Mammary epithelial cell (primary cell): ENCODE measurements at regions of chr6 and their contacts with region 1.

Region 1: DNA sequence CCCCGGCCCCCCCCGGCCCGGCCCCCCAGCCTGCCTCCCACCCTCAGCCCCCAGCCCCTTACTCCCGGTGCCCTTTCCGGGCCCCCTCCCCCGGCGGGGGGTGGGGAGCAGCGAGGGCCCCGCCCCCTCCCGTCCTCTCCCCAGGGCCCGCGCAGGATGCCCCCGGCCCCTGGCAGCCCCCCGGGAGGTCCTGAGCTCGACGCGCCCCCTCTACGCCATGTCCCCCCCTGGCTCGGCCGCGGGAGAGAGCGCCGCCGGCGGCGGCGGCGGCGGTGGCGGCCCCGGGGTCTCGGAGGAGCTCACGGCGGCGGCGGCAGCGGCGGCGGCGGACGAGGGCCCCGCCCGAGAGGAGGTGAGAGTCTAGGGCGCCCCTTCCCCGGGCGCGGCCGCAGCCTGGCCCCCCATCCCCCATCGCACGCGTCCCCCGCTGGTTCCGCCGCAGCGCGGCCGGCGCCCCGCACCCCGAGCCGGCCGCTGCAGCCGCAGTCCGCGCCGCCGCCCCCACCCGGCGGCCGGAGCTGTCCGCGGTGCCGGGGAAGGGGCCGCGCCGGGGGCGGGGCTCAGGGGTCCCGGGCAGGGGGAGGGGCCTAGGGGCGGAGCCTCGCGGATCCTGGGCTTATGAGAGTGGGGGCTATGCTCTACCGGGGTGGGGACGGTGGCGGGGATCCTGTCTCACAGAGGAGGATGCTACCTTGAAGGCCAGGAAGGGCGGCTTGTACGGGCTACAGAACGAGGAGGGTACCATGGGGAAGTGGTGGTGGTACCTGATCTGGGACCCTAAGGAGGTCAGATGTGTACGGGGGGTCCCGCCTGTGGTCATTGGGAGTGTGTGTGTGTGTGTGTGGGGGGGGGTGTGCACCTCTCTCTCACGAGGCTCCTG is 516 bp downstream of the TMEM151B start:
- DNase-seq: no peak
- H3K4me3 ChIP-seq: peak overlapping the region in 1 of 3 experiments; percentile 17
- H3K27ac ChIP-seq: no peak overlapping the region
- H3K4me1 ChIP-seq: peaks cover 11% of the 10 kb centered on the region
- H3K27me3 ChIP-seq: peaks cover 5% of the 10 kb centered on the region
- CTCF ChIP-seq: no peak

Region 2: DNA sequence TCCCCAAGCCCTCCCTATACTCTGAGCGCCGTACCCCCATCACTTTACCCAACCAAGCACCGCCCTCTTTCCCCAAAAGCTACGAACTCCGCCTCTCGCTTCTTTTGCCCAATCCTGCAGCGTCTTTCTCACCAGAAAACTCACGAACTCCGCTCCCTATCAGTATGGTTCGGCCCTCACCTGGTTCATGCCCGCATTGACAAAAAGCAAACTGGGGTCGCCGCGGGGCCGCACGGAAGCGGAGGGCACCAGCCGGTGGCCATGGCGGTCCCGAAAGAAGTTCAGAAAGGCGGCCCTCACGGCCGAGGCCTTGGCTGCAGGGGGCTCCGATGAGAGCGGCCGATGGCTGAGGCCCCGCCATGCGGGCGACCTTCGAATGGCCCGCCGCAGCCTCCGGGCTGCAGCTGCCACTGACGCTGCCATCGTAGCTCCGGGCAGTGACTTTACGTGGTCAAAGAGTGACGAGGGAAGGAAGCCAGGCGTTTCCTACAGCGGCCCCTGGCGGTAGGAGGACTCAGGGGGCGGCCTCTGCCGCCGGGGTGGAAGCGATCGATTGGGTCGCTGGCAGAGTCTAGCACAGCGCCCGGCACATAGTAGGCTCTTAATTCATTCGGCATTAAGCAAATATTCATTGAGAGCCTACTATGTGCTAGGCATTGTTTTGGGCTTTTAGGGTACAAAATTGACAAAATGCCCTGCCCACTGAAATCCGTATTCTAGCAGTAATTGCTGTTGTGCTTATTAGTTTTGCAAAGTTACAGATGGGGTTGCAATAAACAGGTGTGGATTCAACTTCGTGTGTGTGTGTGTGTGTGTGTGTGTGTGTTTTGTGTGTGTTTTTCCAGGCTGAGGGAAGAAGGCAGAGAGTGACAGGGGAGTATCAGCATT is 42.4 kb after region 1 on chr6 and contains the start of gene AARS2:
- CTCF ChIA-PET with region 1: interaction called, 6 read pairs
- dilution Hi-C with region 1: loop called (anchors 5 kb)
- in situ Hi-C with region 1: no loop called
- intact Hi-C with region 1: loop called (anchors 1 kb)
- DNase-seq: peak; percentile 76
- H3K4me3 ChIP-seq: peak within 1 kb of the TSS; percentile 58 to 78 (median 75)
- H3K27ac ChIP-seq: peak within 1 kb of the TSS; percentile 50
- H3K4me1 ChIP-seq: peaks cover 26% of the 10 kb centered on the region
- H3K27me3 ChIP-seq: no peaks in the 10 kb centered on the region
- CTCF ChIP-seq: peak; percentile 90 to 99
- total RNA-seq, gene AARS2: 9.2 to 16.8 TPM

Region 3: GRCh38 chr6:44387346-44388133 is 116.8 kb after region 1 on chr6 and contains the start of gene CDC5L:
- CTCF ChIA-PET with region 1: interaction called, 29 read pairs
- dilution Hi-C with region 1: no loop called
- in situ Hi-C with region 1: no loop called
- intact Hi-C with region 1: loop called (anchors 2 kb)
- DNase-seq: peak; percentile 97
- H3K4me3 ChIP-seq: peak within 1 kb of the TSS; percentile 83 to 96 (median 87)
- H3K27ac ChIP-seq: peak within 1 kb of the TSS; percentile 89
- H3K4me1 ChIP-seq: peaks cover 15% of the 10 kb centered on the region
- H3K27me3 ChIP-seq: no peaks in the 10 kb centered on the region
- CTCF ChIP-seq: no peak
- total RNA-seq, gene CDC5L: 13.2 to 19.5 TPM